ENCODE measurements at regions of chr3 and their contacts with region 1.

Region 1: GRCh38 chr3:169662132-169662842 is 1.2 kb downstream of the MECOM start:
- DNase-seq: peak; percentile 71
- H3K4me3 ChIP-seq: peak overlapping the region; percentile 58
- H3K27ac ChIP-seq: peak overlapping the region; percentile 85
- H3K4me1 ChIP-seq: no peaks in the 10 kb centered on the region
- H3K27me3 ChIP-seq: peaks cover 28% of the 10 kb centered on the region
- CTCF ChIP-seq: peak; percentile 38

Region 2: GRCh38 chr3:169149349-169149890 is 512.9 kb before region 1 on chr3:
- intact Hi-C with region 1: loop called (anchors 2 kb)
- DNase-seq: peak; percentile 88
- H3K4me3 ChIP-seq: peak overlapping the region; percentile 19
- H3K27ac ChIP-seq: peak overlapping the region; percentile 78
- H3K4me1 ChIP-seq: no peaks in the 10 kb centered on the region
- H3K27me3 ChIP-seq: no peaks in the 10 kb centered on the region
- CTCF ChIP-seq: peak; percentile 70

Region 3: DNA sequence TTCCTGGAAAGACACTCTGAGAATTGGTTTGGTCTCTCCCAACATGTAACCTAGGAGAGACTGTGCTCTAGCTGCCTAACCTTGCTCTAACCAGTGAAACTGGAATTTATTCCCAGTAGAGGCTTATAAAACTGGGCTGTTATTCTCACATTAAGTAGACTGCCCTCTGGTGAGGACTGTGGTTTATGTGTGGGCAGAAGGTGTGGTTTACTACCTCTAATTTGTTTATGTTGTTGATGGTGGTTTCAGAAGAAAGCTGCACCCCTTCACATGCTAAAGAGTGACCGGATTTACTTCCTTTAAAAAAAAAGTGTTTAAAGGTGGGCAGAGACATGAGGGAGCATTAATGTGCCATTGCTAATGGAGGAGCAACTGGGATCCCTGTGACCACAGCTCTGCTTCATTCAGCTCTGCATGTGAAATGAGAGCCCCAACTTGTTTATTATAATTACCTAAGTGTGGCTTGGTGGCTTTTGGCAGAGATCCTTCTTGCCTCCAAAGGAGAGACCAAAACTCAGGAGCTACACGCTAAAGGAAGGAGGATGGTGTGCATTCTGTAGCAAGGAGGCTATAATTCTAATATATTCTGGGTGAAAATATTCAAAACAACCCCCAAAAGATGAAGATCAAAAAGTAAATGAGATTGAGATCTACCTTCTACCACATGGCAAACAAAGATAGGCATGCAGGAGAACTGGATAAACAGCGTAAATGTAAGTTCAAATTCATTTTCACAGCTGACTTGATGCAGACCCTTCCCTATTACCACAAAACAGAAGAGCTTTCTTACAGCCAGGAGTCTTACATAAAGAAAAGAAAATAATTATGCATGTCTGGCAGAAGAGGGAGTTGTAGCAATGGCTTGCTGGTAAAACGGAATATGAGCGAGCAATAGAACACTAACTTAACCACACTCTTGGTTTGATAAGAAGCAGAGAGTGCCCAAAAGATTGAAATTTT is 271.7 kb before region 1 on chr3:
- intact Hi-C with region 1: loop called (anchors 5 kb)
- DNase-seq: peak; percentile 31
- H3K4me3 ChIP-seq: no peak overlapping the region
- H3K27ac ChIP-seq: peak overlapping the region; percentile 86
- H3K4me1 ChIP-seq: peaks cover 14% of the 10 kb centered on the region
- H3K27me3 ChIP-seq: no peaks in the 10 kb centered on the region
- CTCF ChIP-seq: no peak

Region 4: DNA sequence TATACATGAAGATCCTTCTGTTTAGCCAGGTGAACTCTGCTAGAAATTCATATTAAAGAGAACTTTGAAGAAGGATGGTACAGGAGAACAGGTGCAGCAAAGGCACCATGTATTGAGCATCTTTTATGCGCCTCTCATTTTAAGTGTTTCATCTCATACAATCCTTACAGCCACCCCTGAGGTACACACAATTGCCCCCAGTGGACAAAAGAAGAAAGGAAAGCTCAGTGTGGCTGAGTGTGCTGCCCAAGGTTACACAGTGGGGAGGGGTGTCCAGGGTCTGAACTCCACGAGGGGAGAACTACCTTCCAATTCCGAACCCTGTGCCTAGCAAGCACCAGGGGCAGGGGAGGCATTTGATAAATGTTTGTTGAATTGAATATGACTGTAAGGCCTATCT is 97.4 kb before region 1 on chr3:
- intact Hi-C with region 1: loop called (anchors 5 kb)
- DNase-seq: no peak
- H3K4me3 ChIP-seq: no peak overlapping the region
- H3K27ac ChIP-seq: no peak overlapping the region
- H3K4me1 ChIP-seq: no peaks in the 10 kb centered on the region
- H3K27me3 ChIP-seq: no peaks in the 10 kb centered on the region
- CTCF ChIP-seq: no peak

Region 5: GRCh38 chr3:169822540-169822939 is 160.3 kb after region 1 on chr3:
- intact Hi-C with region 1: no loop called
- DNase-seq: no peak
- H3K4me3 ChIP-seq: no peak overlapping the region
- H3K27ac ChIP-seq: no peak overlapping the region
- H3K4me1 ChIP-seq: no peaks in the 10 kb centered on the region
- H3K27me3 ChIP-seq: no peaks in the 10 kb centered on the region
- CTCF ChIP-seq: no peak